OCI-LY7 (cell line): ENCODE measurements at regions of chr15 and their contacts with region 1.

Region 1: GRCh38 chr15:48877630-48878595 is at the start of gene EID1:
- DNase-seq: peak; percentile 97
- H3K4me3 ChIP-seq: peak within 1 kb of the TSS; percentile 85
- H3K27ac ChIP-seq: peak within 1 kb of the TSS; percentile 72
- H3K4me1 ChIP-seq: peaks cover 16% of the 10 kb centered on the region
- CTCF ChIP-seq: no peak
- total RNA-seq, gene EID1: 104 and 106 TPM in 2 replicates

Region 2: GRCh38 chr15:48810414-48811317 is 67.2 kb before region 1 on chr15 and contains the start of gene CEP152:
- CTCF ChIA-PET with region 1: no interaction called
- POLR2A ChIA-PET with region 1: interaction called, 9 read pairs
- intact Hi-C with region 1: loop called (anchors 2 kb)
- DNase-seq: peak; percentile 100
- H3K4me3 ChIP-seq: peak within 1 kb of the TSS; percentile 94
- H3K27ac ChIP-seq: peak within 1 kb of the TSS; percentile 78
- H3K4me1 ChIP-seq: peaks cover 39% of the 10 kb centered on the region
- CTCF ChIP-seq: no peak
- total RNA-seq, gene CEP152: 37.6 and 68.2 TPM in 2 replicates

Region 3: DNA sequence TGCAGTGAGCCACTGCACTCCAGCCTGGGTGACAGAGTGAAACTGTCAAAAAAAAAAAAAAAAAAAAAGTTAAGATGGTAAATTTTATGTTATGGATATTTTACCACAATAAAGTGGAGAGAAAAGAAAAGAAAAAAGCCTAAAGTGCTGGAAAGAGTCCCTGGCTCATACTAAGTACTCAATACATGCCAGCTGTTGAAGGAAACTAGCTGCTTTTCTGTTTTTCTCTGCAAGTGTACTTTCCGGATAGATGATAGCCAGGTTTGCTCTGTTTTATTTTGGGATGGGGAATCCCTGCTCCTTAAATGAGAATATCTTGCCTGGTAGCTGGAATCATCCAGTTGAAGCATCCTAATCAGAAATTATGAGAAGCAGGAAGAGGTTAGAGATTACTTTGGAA is 10.9 kb after region 1 on chr15:
- CTCF ChIA-PET with region 1: no interaction called
- POLR2A ChIA-PET with region 1: interaction called, 19 read pairs
- intact Hi-C with region 1: no loop called
- DNase-seq: no peak
- H3K4me3 ChIP-seq: no peak overlapping the region
- H3K27ac ChIP-seq: no peak overlapping the region
- H3K4me1 ChIP-seq: no peaks in the 10 kb centered on the region
- CTCF ChIP-seq: no peak

Region 4: DNA sequence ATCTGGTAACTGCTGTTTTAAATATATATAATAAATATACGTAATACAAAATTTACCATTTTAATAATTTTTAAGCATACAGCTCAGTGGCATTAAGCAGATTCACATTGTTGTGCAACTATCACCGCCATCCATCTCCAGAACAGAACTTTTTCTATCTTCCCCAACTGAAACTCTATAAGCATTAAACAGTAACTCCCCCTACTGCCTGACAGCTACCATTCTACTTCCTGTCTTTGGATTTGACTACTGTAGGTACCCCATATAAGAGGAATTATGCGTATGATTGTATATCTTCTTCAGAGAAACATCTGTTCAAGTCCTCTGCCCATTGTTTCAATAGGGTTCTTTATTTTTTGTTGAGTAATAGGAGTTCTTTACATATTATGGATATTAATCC is 36.8 kb after region 1 on chr15:
- CTCF ChIA-PET with region 1: no interaction called
- POLR2A ChIA-PET with region 1: no interaction called
- intact Hi-C with region 1: no loop called
- DNase-seq: no peak
- H3K4me3 ChIP-seq: no peak overlapping the region
- H3K27ac ChIP-seq: no peak overlapping the region
- H3K4me1 ChIP-seq: no peaks in the 10 kb centered on the region
- CTCF ChIP-seq: peak; percentile 34; the same call in 1 of the 2 replicates

Region 5: DNA sequence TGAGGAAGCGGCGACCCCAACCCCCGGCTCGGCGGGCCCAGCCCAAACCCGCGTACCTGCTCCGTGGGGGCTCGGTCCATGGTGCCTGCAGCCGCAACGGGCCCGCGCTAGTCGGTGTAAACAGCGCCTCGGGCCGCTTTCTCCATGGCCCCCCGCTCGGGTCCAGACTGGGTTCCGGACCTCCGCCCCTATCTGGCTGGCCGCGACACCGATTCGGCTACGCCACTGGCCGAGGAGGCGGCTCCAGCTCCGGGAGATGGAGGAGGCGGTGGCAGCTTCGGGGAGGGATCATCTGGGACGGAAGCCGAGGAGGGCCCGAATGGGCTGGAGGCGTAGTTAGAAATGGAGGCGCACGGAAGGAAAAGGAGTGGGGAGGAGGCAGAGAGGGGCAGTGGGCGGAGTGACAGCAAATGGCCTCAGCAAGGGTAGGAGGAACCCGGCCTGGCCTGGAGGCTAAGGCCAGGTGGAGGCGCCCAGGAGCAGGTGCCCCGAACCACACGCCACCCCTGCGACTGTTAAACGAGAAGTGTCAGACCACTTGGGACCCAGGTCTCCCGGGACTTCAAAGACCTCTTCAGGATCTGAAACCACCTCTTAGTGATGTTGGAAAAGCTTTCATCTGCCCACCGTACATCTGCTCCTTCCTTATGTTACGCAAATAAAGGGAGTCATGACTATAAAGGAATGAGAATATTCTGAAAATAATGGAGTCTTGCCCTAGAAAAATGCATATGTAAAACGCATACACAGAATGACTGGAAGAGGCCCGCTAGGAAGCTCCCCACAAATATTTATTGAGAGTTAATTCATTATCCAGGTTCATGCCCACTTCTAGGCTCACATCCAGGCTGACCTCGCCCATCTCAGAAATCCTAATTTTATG is 168.5 kb after region 1 on chr15 and contains the start of gene SECISBP2L:
- CTCF ChIA-PET with region 1: no interaction called
- POLR2A ChIA-PET with region 1: interaction called, 6 read pairs
- intact Hi-C with region 1: loop called (anchors 2 kb)
- DNase-seq: peak; percentile 93
- H3K4me3 ChIP-seq: peak within 1 kb of the TSS; percentile 86
- H3K27ac ChIP-seq: peak within 1 kb of the TSS; percentile 62
- H3K4me1 ChIP-seq: peaks cover 23% of the 10 kb centered on the region
- CTCF ChIP-seq: peak; percentile 78
- total RNA-seq, gene SECISBP2L: 13.3 and 15.4 TPM in 2 replicates

Region 6: GRCh38 chr15:49620658-49621368 is 742.9 kb after region 1 on chr15 and contains the starts of genes DTWD1 and FAM227B:
- CTCF ChIA-PET with region 1: no interaction called
- POLR2A ChIA-PET with region 1: no interaction called
- intact Hi-C with region 1: loop called (anchors 2 kb)
- DNase-seq: peak; percentile 97
- H3K4me3 ChIP-seq: peak within 1 kb of the TSS; percentile 86
- H3K27ac ChIP-seq: peak within 1 kb of the TSS; percentile 54
- H3K4me1 ChIP-seq: peaks cover 17% of the 10 kb centered on the region
- CTCF ChIP-seq: 0 out of 2 replicates have a peak, but pooled peaks have one; percentile 6
- total RNA-seq, gene DTWD1: 6.8 and 9.4 TPM in 2 replicates
- total RNA-seq, gene FAM227B: 2.9 and 3.2 TPM in 2 replicates